ENCODE measurements at regions of chr3 and their contacts with region 1.

Region 1: DNA sequence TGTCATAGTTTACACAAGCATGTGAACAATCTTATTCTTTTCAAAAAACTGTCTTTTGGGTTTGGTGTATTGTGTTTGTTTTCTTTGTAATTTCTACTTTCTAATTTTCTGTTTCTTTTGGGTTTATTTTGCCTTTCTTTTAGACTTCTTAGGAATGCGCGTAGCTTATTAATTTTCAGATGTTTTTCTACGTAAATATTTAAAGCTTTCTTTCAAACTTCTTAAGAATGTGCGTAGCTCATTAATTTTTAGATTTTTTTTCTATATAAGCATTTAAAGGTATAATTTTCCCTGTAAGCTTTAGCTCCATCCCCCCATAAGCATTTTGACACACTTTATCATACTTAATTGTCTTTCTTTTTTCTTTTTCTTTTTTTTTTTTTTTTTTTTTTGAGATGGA is 55.2 kb downstream of the RAD54L2 start:
- DNase-seq: no peak
- ATAC-seq: no peak
- H3K4me3 ChIP-seq: no peak overlapping the region
- H3K4me3 Mint-ChIP-seq: no peak overlapping the region
- H3K27ac ChIP-seq: no peak overlapping the region
- H3K27ac Mint-ChIP-seq: no peak overlapping the region
- H3K4me1 ChIP-seq: no peaks in the 10 kb centered on the region
- H3K4me1 Mint-ChIP-seq: peaks cover 4 to 18% (median 6%) of the 10 kb centered on the region in 3 donors
- H3K27me3 ChIP-seq: no peaks in the 10 kb centered on the region
- H3K27me3 Mint-ChIP-seq: no peaks in the 10 kb centered on the region

Region 2: GRCh38 chr3:50292159-50293078 is 1301.3 kb before region 1 on chr3 and contains the start of gene IFRD2:
- CTCF ChIA-PET with region 1: no interaction called
- POLR2A ChIA-PET with region 1: no interaction called
- DNase-seq: peak; percentile 84 to 98 (median 96)
- ATAC-seq: peak; percentile 98 to 99 (median 99)
- H3K4me3 ChIP-seq: peak within 1 kb of the TSS; percentile 82 to 95
- H3K4me3 Mint-ChIP-seq: peak within 1 kb of the TSS; percentile 81 to 90 (median 85)
- H3K27ac ChIP-seq: peak within 1 kb of the TSS; percentile 56
- H3K27ac Mint-ChIP-seq: peak within 1 kb of the TSS; percentile 95 to 97
- H3K4me1 ChIP-seq: peaks cover 5 to 30% of the 10 kb centered on the region in 2 experiments
- H3K4me1 Mint-ChIP-seq: peaks cover 14 to 25% (median 21%) of the 10 kb centered on the region in 3 donors
- H3K27me3 ChIP-seq: no peaks in the 10 kb centered on the region
- H3K27me3 Mint-ChIP-seq: no peaks in the 10 kb centered on the region
- total RNA-seq, gene IFRD2: 50.0 to 91.2 (median 75.9) TPM

Region 3: GRCh38 chr3:51519848-51520247 is 73.8 kb before region 1 on chr3:
- CTCF ChIA-PET with region 1: no interaction called
- POLR2A ChIA-PET with region 1: interaction called in 1 of 2 experiments, 14 read pairs
- DNase-seq: no peak
- ATAC-seq: no peak
- H3K4me3 ChIP-seq: no peak overlapping the region
- H3K4me3 Mint-ChIP-seq: no peak overlapping the region
- H3K27ac ChIP-seq: no peak overlapping the region
- H3K27ac Mint-ChIP-seq: no peak overlapping the region
- H3K4me1 ChIP-seq: no peaks in the 10 kb centered on the region
- H3K4me1 Mint-ChIP-seq: peaks cover 3 to 7% (median 6%) of the 10 kb centered on the region in 3 donors
- H3K27me3 ChIP-seq: peaks cover 0 to 2% of the 10 kb centered on the region in 2 experiments
- H3K27me3 Mint-ChIP-seq: no peaks in the 10 kb centered on the region